ENCODE measurements at regions of chr9 and their contacts with region 1.

Region 1: GRCh38 chr9:112750111-112750767 is at the start of gene SNX30:
- DNase-seq: peak; percentile 49 to 92 (median 78)
- ATAC-seq: peak; percentile 65
- H3K4me3 ChIP-seq: peak within 1 kb of the TSS; percentile 81
- H3K4me3 Mint-ChIP-seq: peak within 1 kb of the TSS; percentile 91
- H3K27ac ChIP-seq: peak within 1 kb of the TSS; percentile 60 to 79
- H3K27ac Mint-ChIP-seq: peak within 1 kb of the TSS; percentile 81
- H3K4me1 ChIP-seq: peaks cover 55% of the 10 kb centered on the region
- H3K4me1 Mint-ChIP-seq: peaks cover 59% of the 10 kb centered on the region
- H3K27me3 ChIP-seq: no peaks in the 10 kb centered on the region
- H3K27me3 Mint-ChIP-seq: no peaks in the 10 kb centered on the region
- CTCF ChIP-seq: no peak
- total RNA-seq, gene SNX30: 5.2 to 5.8 TPM

Region 2: GRCh38 chr9:112379177-112380101 is 370.8 kb before region 1 on chr9:
- CTCF ChIA-PET with region 1: no interaction called
- POLR2A ChIA-PET with region 1: interaction called, 4 read pairs
- intact Hi-C with region 1: loop called in 1 of 2 experiments (anchors 2 kb)
- DNase-seq: peak; percentile 94 to 100 (median 98)
- ATAC-seq: peak; percentile 96
- H3K4me3 ChIP-seq: peak overlapping the region; percentile 98
- H3K4me3 Mint-ChIP-seq: peak overlapping the region; percentile 100
- H3K27ac ChIP-seq: peak overlapping the region; percentile 89 to 94
- H3K27ac Mint-ChIP-seq: peak overlapping the region; percentile 98
- H3K4me1 ChIP-seq: peaks cover 17% of the 10 kb centered on the region
- H3K4me1 Mint-ChIP-seq: peaks cover 64% of the 10 kb centered on the region
- H3K27me3 ChIP-seq: no peaks in the 10 kb centered on the region
- H3K27me3 Mint-ChIP-seq: no peaks in the 10 kb centered on the region
- CTCF ChIP-seq: no peak